Common myeloid progenitor, CD34-positive (primary cell): ENCODE measurements at regions of chr3 and their contacts with region 1.

Region 1: GRCh38 chr3:4986782-4987537 is 7.7 kb downstream of the BHLHE40 start:
- DNase-seq: peak; percentile 56 to 71 (median 58)
- H3K4me3 ChIP-seq: peak overlapping the region; percentile 38 to 80 (median 63)
- H3K27ac ChIP-seq: peak overlapping the region in 1 of 2 experiments; percentile 88
- H3K4me1 ChIP-seq: peaks cover 13 to 71% (median 52%) of the 10 kb centered on the region in 4 experiments
- H3K27me3 ChIP-seq: no peaks in the 10 kb centered on the region

Region 2: DNA sequence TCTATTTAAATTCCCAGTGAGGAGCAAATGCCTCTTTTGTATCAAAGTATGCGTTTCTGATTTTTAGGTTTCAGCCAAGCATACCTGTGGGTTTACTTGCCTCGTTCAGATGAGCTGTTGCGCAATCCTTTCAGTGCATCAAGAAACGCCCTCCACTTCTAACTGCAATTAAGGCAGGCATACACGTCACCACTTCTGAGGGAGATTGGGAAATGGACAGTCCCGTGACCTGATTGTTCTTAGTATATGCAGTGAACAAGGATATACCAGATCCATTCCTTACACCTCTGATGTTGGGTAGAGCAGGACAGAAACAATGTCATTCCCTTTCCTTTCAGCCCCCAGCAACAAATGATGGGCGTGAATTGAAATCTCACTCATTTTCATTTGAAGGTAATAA is 274.8 kb before region 1 on chr3:
- CTCF ChIA-PET with region 1: interaction called, 27 read pairs
- POLR2A ChIA-PET with region 1: interaction called, 3 read pairs
- DNase-seq: no peak
- H3K4me3 ChIP-seq: no peak overlapping the region
- H3K27ac ChIP-seq: no peak overlapping the region
- H3K4me1 ChIP-seq: peaks cover 0 to 14% (median 6%) of the 10 kb centered on the region in 4 experiments
- H3K27me3 ChIP-seq: no peaks in the 10 kb centered on the region

Region 3: GRCh38 chr3:5006755-5007202 is 19.8 kb after region 1 on chr3:
- CTCF ChIA-PET with region 1: interaction called, 135 read pairs
- POLR2A ChIA-PET with region 1: interaction called, 29 read pairs
- DNase-seq: peak; percentile 85 to 97 (median 95)
- H3K4me3 ChIP-seq: peak overlapping the region in 2 of 7 experiments; percentile 1 to 7
- H3K27ac ChIP-seq: no peak overlapping the region
- H3K4me1 ChIP-seq: peaks cover 25 to 87% (median 79%) of the 10 kb centered on the region in 4 experiments
- H3K27me3 ChIP-seq: no peaks in the 10 kb centered on the region

Region 4: DNA sequence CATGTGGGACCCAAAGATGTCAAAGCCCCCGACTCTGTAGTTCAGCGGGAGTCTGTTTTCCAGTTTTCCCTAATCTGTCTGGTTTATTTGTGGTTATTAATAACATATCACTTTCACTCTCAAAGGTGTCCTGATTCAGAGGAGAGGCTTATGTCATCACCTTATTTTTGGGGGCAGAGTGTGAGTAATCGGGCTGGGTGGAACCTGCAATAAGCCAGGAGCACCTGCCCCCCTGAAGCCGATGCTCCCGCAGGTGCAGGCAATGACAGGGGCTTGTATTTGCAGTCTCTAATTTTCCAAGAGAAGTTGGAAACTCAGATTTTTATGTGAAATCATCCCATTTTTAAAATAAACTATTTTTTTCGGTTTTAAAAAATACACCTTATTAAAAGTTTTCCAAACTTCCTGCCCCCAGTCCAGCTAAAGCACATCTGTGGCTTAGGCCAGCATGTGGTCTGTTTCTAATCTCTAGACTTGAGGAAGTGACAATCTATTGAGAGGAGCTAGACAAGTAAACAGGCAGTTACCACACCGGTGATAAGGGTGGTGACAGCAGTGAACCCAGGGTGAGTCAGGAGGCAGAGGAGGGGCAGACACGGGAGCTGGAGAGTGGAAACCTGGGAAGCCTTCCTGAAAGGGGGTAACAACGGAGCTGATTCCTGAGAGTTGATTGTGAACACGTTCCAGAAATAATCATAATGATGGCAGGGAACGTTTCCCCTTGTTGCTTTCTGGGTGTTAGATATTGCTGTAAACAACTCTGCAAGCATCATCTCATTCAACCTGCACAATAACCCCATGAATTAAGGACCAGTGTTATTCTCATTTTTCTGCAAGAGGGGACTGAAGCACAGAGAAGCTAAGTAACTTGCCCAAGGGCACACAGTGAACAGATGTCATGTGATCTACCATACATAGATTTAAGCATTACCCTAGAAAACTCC is 29.5 kb after region 1 on chr3:
- CTCF ChIA-PET with region 1: interaction called, 80 read pairs
- POLR2A ChIA-PET with region 1: interaction called, 29 read pairs
- DNase-seq: peak; percentile 60 to 89 (median 78)
- H3K4me3 ChIP-seq: peak overlapping the region in 3 of 7 experiments; percentile 19 to 39 (median 34)
- H3K27ac ChIP-seq: peak overlapping the region in 1 of 2 experiments; percentile 7
- H3K4me1 ChIP-seq: peaks cover 31 to 88% (median 76%) of the 10 kb centered on the region in 4 experiments
- H3K27me3 ChIP-seq: no peaks in the 10 kb centered on the region